ENCODE measurements at regions of chr7 and their contacts with region 1.

Region 1: GRCh38 chr7:1225441-1226185 is 7.1 kb upstream of the UNCX start:
- DNase-seq: peak in 3 of 10 donors; percentile 45 to 53 (median 50)

Region 2: GRCh38 chr7:1412322-1413261 is 187.0 kb after region 1 on chr7:
- intact Hi-C with region 1: loop called (anchors 1 kb)
- DNase-seq: peak in 9 of 10 donors; percentile 27 to 95 (median 69)

Region 3: DNA sequence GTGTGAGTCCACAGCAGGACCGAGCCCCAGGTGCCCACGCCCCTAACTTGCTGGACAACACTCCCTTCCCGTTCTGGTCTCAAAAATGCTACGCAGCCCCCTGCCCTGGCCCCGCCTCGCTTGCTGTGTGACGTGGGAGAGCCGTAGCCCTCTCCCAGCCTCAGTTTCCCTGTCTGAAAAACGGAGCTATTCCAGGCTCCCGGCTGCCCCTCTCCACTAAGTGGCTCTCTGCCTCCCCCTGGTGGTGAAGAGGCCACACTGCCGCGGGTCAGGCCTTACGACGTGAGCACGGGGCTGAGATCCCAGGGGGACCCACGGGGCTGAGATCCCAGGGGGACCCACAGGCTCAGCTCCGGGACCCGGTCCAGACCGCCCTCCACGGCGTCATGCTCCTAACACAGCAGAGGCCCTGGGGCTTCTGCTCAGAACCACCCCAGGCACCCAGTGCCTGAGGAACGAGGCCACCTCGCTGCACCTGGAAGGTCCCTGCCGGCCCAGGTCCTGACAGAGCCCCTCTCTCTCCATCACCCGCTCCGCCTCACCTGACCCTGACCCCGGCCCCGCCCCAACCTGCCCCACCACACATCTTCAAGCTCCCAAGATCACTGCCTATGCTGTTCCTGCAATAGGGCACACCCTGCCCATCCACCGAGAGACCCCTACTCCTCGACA is 206.9 kb after region 1 on chr7:
- intact Hi-C with region 1: loop called (anchors 5 kb)
- DNase-seq: peak in 9 of 10 donors; percentile 40 to 93 (median 74)

Region 4: GRCh38 chr7:1473864-1474512 is 248.4 kb after region 1 on chr7:
- intact Hi-C with region 1: loop called (anchors 10 kb)
- DNase-seq: peak; percentile 75 to 98 (median 90)